ENCODE measurements at regions of chr5 and their contacts with region 1.

Region 1: GRCh38 chr5:173789031-173789920 is 98.9 kb upstream of the CPEB4 start:
- DNase-seq: no peak
- ATAC-seq: no peak
- H3K4me3 Mint-ChIP-seq: no peak overlapping the region
- H3K27ac Mint-ChIP-seq: no peak overlapping the region
- H3K4me1 Mint-ChIP-seq: peaks cover 34% of the 10 kb centered on the region
- H3K27me3 Mint-ChIP-seq: no peaks in the 10 kb centered on the region
- CTCF ChIP-seq: no peak

Region 2: DNA sequence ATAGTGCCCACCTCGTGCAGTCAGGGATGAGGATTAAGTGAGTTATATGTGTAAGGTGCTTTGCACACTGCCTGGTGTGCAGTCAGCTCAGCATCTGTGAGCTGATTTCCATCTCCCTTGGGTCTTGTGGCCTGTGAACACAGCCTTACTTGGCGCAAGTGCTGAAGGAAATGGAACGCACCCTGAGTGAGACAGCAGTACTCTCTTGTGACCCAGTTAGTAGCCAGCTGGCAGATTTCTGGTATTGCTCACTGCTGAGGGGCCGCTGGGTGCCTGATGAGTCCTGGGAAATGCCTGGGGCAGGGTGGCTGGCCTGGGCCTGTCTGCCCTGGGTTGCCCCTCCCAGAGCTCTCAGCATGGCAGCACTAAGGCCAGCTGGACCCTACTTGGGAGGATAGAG is 81.9 kb before region 1 on chr5:
- CTCF ChIA-PET with region 1: interaction called, 3 read pairs
- POLR2A ChIA-PET with region 1: interaction called, 8 read pairs
- intact Hi-C with region 1: loop called (anchors 1 kb)
- DNase-seq: peak; percentile 29
- ATAC-seq: peak; percentile 98
- H3K4me3 Mint-ChIP-seq: peak overlapping the region; percentile 4
- H3K27ac Mint-ChIP-seq: peak overlapping the region; percentile 60
- H3K4me1 Mint-ChIP-seq: peaks cover 27% of the 10 kb centered on the region
- H3K27me3 Mint-ChIP-seq: no peaks in the 10 kb centered on the region
- CTCF ChIP-seq: no peak

Region 3: GRCh38 chr5:173823711-173824528 is 34.6 kb after region 1 on chr5:
- CTCF ChIA-PET with region 1: interaction called, 9 read pairs
- POLR2A ChIA-PET with region 1: interaction called, 9 read pairs
- intact Hi-C with region 1: loop called (anchors 1 kb)
- DNase-seq: no peak
- ATAC-seq: no peak
- H3K4me3 Mint-ChIP-seq: no peak overlapping the region
- H3K27ac Mint-ChIP-seq: peak overlapping the region; percentile 42
- H3K4me1 Mint-ChIP-seq: peaks cover 86% of the 10 kb centered on the region
- H3K27me3 Mint-ChIP-seq: no peaks in the 10 kb centered on the region
- CTCF ChIP-seq: no peak

Region 4: DNA sequence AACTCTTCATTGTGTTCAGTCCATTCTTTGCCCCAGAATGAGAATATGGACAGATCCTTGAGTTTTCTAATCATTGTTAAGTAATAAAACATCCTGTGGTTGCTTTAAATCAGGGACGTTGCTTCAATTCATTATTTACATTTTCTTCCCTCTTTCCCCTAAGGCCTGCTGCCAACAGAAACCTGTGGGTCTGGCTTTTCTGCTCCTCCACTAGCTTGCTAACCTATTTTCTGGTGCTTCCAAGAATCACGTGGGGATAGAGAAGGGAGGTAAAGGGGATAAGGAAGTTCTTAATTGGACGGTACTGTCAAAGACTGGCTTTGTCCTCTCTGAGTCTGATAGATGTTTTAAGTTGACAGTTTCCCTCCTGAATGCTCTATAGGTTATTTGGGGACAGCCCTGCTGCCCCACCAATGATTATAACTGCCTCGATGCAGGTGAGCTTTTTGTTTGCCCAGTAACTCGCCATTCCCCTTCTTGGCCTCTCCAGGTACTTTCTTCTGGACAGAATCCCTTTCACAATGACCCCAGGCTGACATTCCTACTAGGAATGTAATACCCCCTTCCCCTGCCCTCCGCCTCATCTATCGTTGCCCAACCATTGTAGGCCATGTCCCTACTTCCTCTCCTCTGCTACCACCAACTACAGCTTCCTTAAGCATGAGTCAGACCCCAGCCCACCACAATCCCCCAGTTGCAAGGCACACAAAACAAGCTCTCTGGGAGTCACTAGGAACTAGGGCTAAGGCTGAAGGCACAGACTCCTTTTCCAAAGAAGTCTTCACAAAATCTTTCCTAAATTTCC is 79.0 kb after region 1 on chr5:
- CTCF ChIA-PET with region 1: no interaction called
- POLR2A ChIA-PET with region 1: no interaction called
- intact Hi-C with region 1: no loop called
- DNase-seq: no peak
- ATAC-seq: no peak
- H3K4me3 Mint-ChIP-seq: no peak overlapping the region
- H3K27ac Mint-ChIP-seq: no peak overlapping the region
- H3K4me1 Mint-ChIP-seq: no peaks in the 10 kb centered on the region
- H3K27me3 Mint-ChIP-seq: peaks cover 4% of the 10 kb centered on the region
- CTCF ChIP-seq: no peak

Region 5: GRCh38 chr5:173917788-173918786 is 128.8 kb after region 1 on chr5:
- CTCF ChIA-PET with region 1: interaction called, 4 read pairs
- POLR2A ChIA-PET with region 1: interaction called, 6 read pairs
- intact Hi-C with region 1: loop called (anchors 2 kb)
- DNase-seq: no peak
- ATAC-seq: peak; percentile 92
- H3K4me3 Mint-ChIP-seq: no peak overlapping the region
- H3K27ac Mint-ChIP-seq: no peak overlapping the region
- H3K4me1 Mint-ChIP-seq: peaks cover 24% of the 10 kb centered on the region
- H3K27me3 Mint-ChIP-seq: no peaks in the 10 kb centered on the region
- CTCF ChIP-seq: no peak

Region 6: DNA sequence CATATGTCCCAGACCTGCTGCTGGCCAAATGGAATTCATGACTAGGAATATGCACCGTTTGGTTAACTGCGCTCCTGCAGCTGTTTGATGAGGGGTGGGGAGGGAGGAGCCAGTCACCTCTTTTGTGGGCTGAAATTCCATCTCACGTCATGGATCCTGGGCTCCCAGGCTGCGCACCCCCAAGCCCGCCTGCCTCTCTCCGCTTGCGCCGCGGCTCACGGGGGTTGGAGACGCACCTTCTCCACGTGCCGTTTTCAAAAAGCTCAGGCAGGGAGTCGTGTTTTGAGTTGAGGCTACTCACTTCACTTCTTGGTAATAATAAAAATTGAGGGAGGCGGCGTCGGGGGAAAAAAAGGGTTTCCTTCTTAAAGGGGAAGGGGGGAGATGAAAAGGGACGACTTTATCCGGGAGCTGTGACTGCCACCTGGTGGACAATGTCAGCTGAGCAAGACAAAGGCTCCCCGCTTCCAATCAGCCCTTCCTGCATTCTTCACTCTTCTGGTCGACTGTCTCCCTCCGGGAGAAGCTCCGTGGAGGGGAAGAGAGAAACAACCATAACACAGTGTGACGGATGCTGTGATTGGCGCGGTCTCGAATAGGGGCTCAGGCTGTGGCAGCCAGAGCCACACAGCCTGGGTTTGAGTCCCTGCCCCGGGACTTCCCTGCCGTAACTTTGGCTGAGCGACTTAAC is 183.8 kb after region 1 on chr5:
- CTCF ChIA-PET with region 1: interaction called, 12 read pairs
- POLR2A ChIA-PET with region 1: no interaction called
- intact Hi-C with region 1: loop called (anchors 2 kb)
- DNase-seq: peak; percentile 65
- ATAC-seq: peak; percentile 90
- H3K4me3 Mint-ChIP-seq: peak overlapping the region; percentile 78
- H3K27ac Mint-ChIP-seq: no peak overlapping the region
- H3K4me1 Mint-ChIP-seq: peaks cover 10% of the 10 kb centered on the region
- H3K27me3 Mint-ChIP-seq: peaks cover 25% of the 10 kb centered on the region
- CTCF ChIP-seq: peak; percentile 55

Region 7: GRCh38 chr5:174030289-174030688 is 241.0 kb after region 1 on chr5:
- CTCF ChIA-PET with region 1: no interaction called
- POLR2A ChIA-PET with region 1: no interaction called
- intact Hi-C with region 1: no loop called
- DNase-seq: no peak
- ATAC-seq: no peak
- H3K4me3 Mint-ChIP-seq: no peak overlapping the region
- H3K27ac Mint-ChIP-seq: no peak overlapping the region
- H3K4me1 Mint-ChIP-seq: no peaks in the 10 kb centered on the region
- H3K27me3 Mint-ChIP-seq: peaks cover 8% of the 10 kb centered on the region
- CTCF ChIP-seq: no peak

Measured in activated B cell treated with CpG ODN at 0.5 μM for 24 hours (primary cell).